ENCODE measurements at regions of chr9 and their contacts with region 1.

Region 1: GRCh38 chr9:128921881-128922763 is 1.3 kb downstream of the PHYHD1 start:
- DNase-seq: peak; percentile 50 to 82
- H3K4me3 ChIP-seq: peak overlapping the region; percentile 39 to 73 (median 66)
- H3K27ac ChIP-seq: peak overlapping the region; percentile 68
- H3K4me1 ChIP-seq: peaks cover 0 to 10% (median 4%) of the 10 kb centered on the region in 4 experiments; a peak in 5 of 7 replicates
- H3K27me3 ChIP-seq: no peaks in the 10 kb centered on the region
- CTCF ChIP-seq: no peak
- EP300 ChIP-seq: no peak
- POLR2A ChIP-seq: peak in 1 of 2 experiments; percentile 58; a peak in 1 of 3 replicates
- RAD21 ChIP-seq: no peak; a peak in 1 of 4 replicates

Region 2: GRCh38 chr9:128887914-128888350 is 34.2 kb before region 1 on chr9:
- CTCF ChIA-PET with region 1: interaction called, 99 read pairs
- POLR2A ChIA-PET with region 1: interaction called, 18 read pairs
- DNase-seq: peak; percentile 70 to 81
- H3K4me3 ChIP-seq: peak overlapping the region in 1 of 4 experiments; percentile 1; a peak in 1 of 8 replicates
- H3K27ac ChIP-seq: peak overlapping the region; percentile 64; the same call in 1 of the 2 replicates
- H3K4me1 ChIP-seq: peaks cover 6 to 36% (median 21%) of the 10 kb centered on the region in 4 experiments
- H3K27me3 ChIP-seq: no peaks in the 10 kb centered on the region
- CTCF ChIP-seq: no peak
- EP300 ChIP-seq: peak in 1 of 2 experiments; percentile 77; a peak in 1 of 3 replicates
- POLR2A ChIP-seq: no peak
- RAD21 ChIP-seq: peak in 1 of 2 experiments; percentile 2; a peak in 1 of 4 replicates

Region 3: GRCh38 chr9:128911529-128912035 is 10.5 kb before region 1 on chr9:
- CTCF ChIA-PET with region 1: interaction called, 26 read pairs
- POLR2A ChIA-PET with region 1: interaction called, 14 read pairs
- DNase-seq: peak in 1 of 2 experiments; percentile 64
- H3K4me3 ChIP-seq: peak overlapping the region in 1 of 4 experiments; percentile 1; a peak in 1 of 8 replicates
- H3K27ac ChIP-seq: peak overlapping the region; percentile 73; the same call in 1 of the 2 replicates
- H3K4me1 ChIP-seq: peaks cover 0 to 24% (median 18%) of the 10 kb centered on the region in 4 experiments; a peak in 6 of 7 replicates
- H3K27me3 ChIP-seq: no peaks in the 10 kb centered on the region
- CTCF ChIP-seq: no peak
- EP300 ChIP-seq: no peak
- POLR2A ChIP-seq: no peak
- RAD21 ChIP-seq: no peak

Measured in H1 (cell line).